ENCODE measurements at regions of chr1 and their contacts with region 1.

Region 1: DNA sequence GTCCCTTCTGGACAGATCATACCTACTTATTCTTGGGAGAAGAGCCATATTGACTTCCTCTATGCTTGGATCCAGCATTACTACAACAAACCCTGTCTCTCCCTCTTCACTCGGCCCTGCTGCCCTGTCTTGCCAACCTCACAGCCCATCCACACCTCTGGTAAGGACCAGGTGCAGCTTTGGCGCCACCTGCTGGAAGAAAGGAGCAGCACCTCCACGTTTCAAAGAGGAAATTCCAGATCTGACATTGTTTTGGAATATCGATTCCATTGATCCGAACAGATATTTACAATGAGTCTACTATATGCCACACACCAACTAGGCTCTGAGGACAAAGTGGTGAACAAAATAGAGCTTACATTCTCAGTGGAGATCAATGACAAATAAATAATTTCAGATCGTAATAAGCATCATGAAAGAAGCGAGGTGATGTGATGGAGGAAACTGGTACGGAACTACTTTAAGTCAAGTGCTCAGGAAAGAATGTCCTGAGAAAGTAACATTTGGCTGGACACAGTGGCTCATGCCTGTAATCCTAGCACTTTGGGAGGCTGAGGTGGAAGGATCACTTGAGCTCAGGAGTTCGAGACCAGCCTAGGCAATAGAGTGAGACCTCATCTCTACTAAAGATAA is 18.7 kb downstream of the MFSD2A start:
- DNase-seq: peak; percentile 42 to 97 (median 82)

Region 2: GRCh38 chr1:39919545-39919944 is 54.1 kb before region 1 on chr1:
- intact Hi-C with region 1: loop called (anchors 1 kb)
- DNase-seq: peak in 3 of 10 donors; percentile 19 to 80 (median 37)